ENCODE measurements at regions of chr21 and their contacts with region 1.

Region 1: DNA sequence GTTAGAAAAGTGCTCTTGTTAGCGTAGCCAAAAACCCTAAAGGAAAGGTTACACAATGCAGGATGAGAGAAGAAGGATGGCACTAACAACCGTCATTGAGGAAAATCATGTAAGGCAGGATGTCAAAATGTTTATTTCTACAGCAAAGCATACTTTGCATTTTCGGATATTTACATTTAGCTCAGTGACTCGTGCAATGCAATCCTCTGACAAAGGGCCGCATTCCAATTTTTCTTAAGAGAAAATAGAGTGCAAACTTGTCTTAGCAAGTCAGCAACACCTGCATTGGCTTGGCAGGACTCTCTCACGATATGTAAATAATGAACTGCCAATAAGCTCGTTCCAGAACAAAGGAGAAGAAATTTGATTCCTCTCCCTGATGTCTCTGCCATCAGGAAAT is 33.3 kb downstream of the TIAM1 start:
- DNase-seq: no peak
- H3K4me3 ChIP-seq: no peak overlapping the region
- H3K27ac ChIP-seq: no peak overlapping the region
- H3K4me1 ChIP-seq: no peaks in the 10 kb centered on the region
- H3K27me3 ChIP-seq: no peaks in the 10 kb centered on the region

Region 2: GRCh38 chr21:31387560-31388186 is 76.9 kb after region 1 on chr21:
- CTCF ChIA-PET with region 1: no interaction called
- POLR2A ChIA-PET with region 1: interaction called, 10 read pairs
- DNase-seq: no peak
- H3K4me3 ChIP-seq: no peak overlapping the region
- H3K27ac ChIP-seq: no peak overlapping the region
- H3K4me1 ChIP-seq: no peaks in the 10 kb centered on the region
- H3K27me3 ChIP-seq: no peaks in the 10 kb centered on the region

Measured in common myeloid progenitor, CD34-positive (primary cell).